IMR-90 (cell line): ENCODE measurements at regions of chr15 and their contacts with region 1.

Region 1: GRCh38 chr15:83207622-83208411 is at the start of gene HDGFL3:
- DNase-seq: peak; percentile 39
- ATAC-seq: peak; percentile 63
- H3K4me3 ChIP-seq: peak within 1 kb of the TSS; percentile 97
- H3K27ac ChIP-seq: peak within 1 kb of the TSS; percentile 84
- H3K4me1 ChIP-seq: peaks cover 8% of the 10 kb centered on the region
- H3K27me3 ChIP-seq: no peaks in the 10 kb centered on the region
- CTCF ChIP-seq: no peak
- POLR2A ChIP-seq: peak; percentile 85
- RAD21 ChIP-seq: peak; percentile 11; the same call in 1 of the 2 replicates
- total RNA-seq, gene HDGFL3: 9.5 and 31.4 TPM in 2 replicates

Region 2: DNA sequence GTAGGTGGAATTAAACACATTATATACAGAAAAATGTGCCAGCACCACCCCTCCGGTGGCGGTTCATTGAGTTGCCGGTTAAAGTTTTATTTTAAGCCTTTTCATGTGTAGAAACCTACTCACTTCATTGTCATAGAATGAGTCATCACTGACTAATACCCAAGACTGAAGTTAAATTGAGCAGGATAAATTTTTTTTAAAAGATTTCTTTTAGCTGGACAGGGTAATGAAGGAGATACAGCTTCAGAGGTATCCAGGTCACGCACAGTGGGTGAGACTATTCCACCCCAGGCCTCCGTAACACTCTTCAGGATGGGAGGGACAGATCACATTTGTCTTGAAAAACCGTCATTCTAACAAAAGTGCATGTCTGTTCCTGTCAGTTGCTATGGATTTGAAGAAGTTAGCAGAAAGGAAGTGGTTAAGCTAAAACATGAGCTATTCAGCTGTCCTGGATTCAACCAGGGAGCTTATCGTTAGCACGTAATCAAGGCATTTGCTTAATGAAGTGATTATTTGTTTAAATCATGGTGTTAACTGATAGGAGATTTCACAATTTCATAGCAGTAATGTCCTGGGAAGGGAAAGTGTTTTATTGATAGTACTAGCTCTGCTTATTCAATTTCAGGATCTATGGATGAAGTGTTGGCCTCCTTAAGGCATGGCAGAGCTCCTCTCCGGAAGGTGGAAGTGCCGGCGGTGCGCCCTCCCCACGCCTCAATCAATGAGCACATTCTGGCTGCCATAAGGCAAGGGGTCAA is 375.0 kb before region 1 on chr15:
- CTCF ChIA-PET with region 1: no interaction called
- POLR2A ChIA-PET with region 1: no interaction called
- dilution Hi-C with region 1: no loop called
- in situ Hi-C with region 1: no loop called
- intact Hi-C with region 1: loop called (anchors 10 kb)
- DNase-seq: peak; percentile 93
- ATAC-seq: peak; percentile 93
- H3K4me3 ChIP-seq: no peak overlapping the region
- H3K27ac ChIP-seq: peak overlapping the region; percentile 85
- H3K4me1 ChIP-seq: peaks cover 10% of the 10 kb centered on the region
- H3K27me3 ChIP-seq: no peaks in the 10 kb centered on the region
- CTCF ChIP-seq: no peak
- POLR2A ChIP-seq: no peak
- RAD21 ChIP-seq: no peak

Region 3: GRCh38 chr15:83112233-83112955 is 95.4 kb before region 1 on chr15:
- CTCF ChIA-PET with region 1: no interaction called
- POLR2A ChIA-PET with region 1: no interaction called
- dilution Hi-C with region 1: no loop called
- in situ Hi-C with region 1: no loop called
- intact Hi-C with region 1: loop called (anchors 1 kb)
- DNase-seq: peak; percentile 95
- ATAC-seq: peak; percentile 92
- H3K4me3 ChIP-seq: no peak overlapping the region
- H3K27ac ChIP-seq: peak overlapping the region; percentile 77
- H3K4me1 ChIP-seq: peaks cover 18% of the 10 kb centered on the region
- H3K27me3 ChIP-seq: no peaks in the 10 kb centered on the region
- CTCF ChIP-seq: peak; percentile 46
- POLR2A ChIP-seq: no peak
- RAD21 ChIP-seq: peak; percentile 47

Region 4: GRCh38 chr15:83436458-83437158 is 228.8 kb after region 1 on chr15:
- CTCF ChIA-PET with region 1: no interaction called
- POLR2A ChIA-PET with region 1: no interaction called
- dilution Hi-C with region 1: no loop called
- in situ Hi-C with region 1: no loop called
- intact Hi-C with region 1: no loop called
- DNase-seq: peak; percentile 52
- ATAC-seq: peak; percentile 83
- H3K4me3 ChIP-seq: no peak overlapping the region
- H3K27ac ChIP-seq: no peak overlapping the region
- H3K4me1 ChIP-seq: no peaks in the 10 kb centered on the region
- H3K27me3 ChIP-seq: no peaks in the 10 kb centered on the region; the same call in 1 of the 2 replicates
- CTCF ChIP-seq: peak; percentile 58
- POLR2A ChIP-seq: no peak
- RAD21 ChIP-seq: peak; percentile 63

Region 5: GRCh38 chr15:83848315-83849050 is 640.7 kb after region 1 on chr15:
- CTCF ChIA-PET with region 1: no interaction called
- POLR2A ChIA-PET with region 1: no interaction called
- dilution Hi-C with region 1: no loop called
- in situ Hi-C with region 1: no loop called
- intact Hi-C with region 1: loop called (anchors 10 kb)
- DNase-seq: peak; percentile 97
- ATAC-seq: peak; percentile 69
- H3K4me3 ChIP-seq: no peak overlapping the region
- H3K27ac ChIP-seq: peak overlapping the region; percentile 2; the same call in 1 of the 2 replicates
- H3K4me1 ChIP-seq: peaks cover 24% of the 10 kb centered on the region
- H3K27me3 ChIP-seq: no peaks in the 10 kb centered on the region
- CTCF ChIP-seq: no peak
- POLR2A ChIP-seq: no peak
- RAD21 ChIP-seq: no peak